ENCODE measurements at regions of chr4 and their contacts with region 1.

Region 1: DNA sequence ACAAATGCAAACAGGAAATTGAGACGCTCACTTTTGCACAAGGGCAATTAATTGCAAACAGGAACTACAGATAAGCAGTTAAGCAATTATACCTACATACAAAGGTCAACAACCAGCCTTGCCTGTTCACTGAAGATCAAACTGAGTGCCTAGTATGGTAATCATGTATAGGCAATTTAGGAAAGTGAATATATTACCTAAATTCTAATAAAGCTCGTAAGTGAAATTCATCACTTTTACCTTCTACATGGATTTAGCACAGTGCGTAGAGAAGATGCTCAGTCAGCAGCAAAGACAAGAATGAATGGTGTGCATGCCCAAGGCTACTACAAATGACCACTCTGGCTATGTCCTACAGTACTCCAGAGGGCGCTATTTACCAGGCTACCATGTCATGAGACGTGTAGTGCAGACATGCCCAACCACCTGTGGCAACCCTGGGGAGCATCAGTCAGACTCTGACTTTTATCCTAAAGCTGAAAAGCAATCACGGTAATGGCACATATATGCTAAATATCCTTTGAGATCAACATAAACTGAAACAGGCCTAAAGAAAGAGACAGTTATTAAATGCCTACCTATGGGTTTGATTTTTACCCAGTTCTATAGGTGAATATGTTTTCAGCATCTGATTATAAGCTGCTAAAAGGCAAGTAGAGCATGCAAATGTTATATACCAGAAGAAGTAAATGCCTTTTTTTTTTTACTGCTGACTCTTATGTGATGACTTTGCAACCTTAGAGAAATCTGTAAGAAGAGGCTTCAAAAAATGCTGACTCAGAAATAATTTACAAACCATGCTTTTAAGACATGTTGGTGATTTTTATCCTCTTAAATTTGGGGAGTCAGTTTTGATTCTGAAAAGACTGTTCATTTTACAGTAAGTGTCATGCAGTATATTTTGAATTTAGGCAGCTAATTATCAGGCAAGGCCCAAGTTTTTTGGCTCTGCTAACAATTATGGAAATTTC is 178.0 kb downstream of the PPP3CA start:
- DNase-seq: peak; percentile 28 to 61
- ATAC-seq: peak; percentile 92 to 98
- H3K4me3 ChIP-seq: no peak overlapping the region
- H3K27ac ChIP-seq: no peak overlapping the region
- H3K4me1 ChIP-seq: peaks cover 0 to 17% of the 10 kb centered on the region in 2 donors
- H3K27me3 ChIP-seq: no peaks in the 10 kb centered on the region
- CTCF ChIP-seq: peak; percentile 69 to 83 (median 77)
- POLR2A ChIP-seq: no peak

Region 2: DNA sequence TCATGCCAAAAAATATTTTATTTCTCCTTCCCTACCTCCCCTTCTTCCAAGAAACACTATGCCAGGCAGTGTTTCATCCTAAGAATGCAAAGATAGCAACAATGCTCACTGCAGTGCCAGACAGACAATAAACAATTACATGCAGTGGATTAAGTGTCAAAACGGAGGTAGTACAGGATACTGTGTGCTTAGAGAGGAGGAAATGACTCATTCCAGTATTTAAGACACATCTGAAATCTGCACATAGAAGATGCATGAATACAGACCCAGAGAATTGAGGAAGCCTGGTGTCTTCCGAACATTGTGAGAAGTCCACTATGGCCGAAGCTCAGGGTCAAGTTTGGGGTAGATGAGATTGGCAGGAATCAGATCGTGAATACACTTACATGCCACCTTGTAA is 148.4 kb before region 1 on chr4:
- in situ Hi-C with region 1: no loop called
- intact Hi-C with region 1: no loop called
- DNase-seq: no peak
- ATAC-seq: peak; percentile 55 to 83
- H3K4me3 ChIP-seq: no peak overlapping the region
- H3K27ac ChIP-seq: peak overlapping the region in 1 of 4 donors; percentile 4
- H3K4me1 ChIP-seq: peaks cover 7 to 8% of the 10 kb centered on the region in 2 donors
- H3K27me3 ChIP-seq: no peaks in the 10 kb centered on the region
- CTCF ChIP-seq: no peak
- POLR2A ChIP-seq: no peak

Region 3: DNA sequence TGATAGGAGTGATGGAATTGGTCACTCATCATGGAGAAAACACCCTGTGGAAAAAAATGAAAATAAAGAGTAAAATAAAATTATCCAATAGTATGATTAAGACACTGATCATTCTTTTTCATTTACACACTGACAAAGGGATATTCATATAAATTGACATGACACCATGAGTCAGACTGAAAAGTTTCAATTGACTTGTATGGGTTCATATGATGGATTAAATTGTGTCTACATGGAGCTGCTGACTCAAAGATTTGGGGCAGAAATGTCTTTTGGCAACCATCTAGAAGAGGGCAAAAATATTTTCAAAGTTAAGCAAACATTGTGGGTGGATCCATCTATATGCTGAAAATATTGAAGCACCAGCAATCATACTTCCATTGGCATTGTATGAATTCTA is 331.4 kb after region 1 on chr4:
- in situ Hi-C with region 1: no loop called
- intact Hi-C with region 1: no loop called
- DNase-seq: no peak
- ATAC-seq: no peak
- H3K4me3 ChIP-seq: no peak overlapping the region
- H3K27ac ChIP-seq: no peak overlapping the region
- H3K4me1 ChIP-seq: no peaks in the 10 kb centered on the region
- H3K27me3 ChIP-seq: no peaks in the 10 kb centered on the region
- CTCF ChIP-seq: no peak
- POLR2A ChIP-seq: no peak

Region 4: DNA sequence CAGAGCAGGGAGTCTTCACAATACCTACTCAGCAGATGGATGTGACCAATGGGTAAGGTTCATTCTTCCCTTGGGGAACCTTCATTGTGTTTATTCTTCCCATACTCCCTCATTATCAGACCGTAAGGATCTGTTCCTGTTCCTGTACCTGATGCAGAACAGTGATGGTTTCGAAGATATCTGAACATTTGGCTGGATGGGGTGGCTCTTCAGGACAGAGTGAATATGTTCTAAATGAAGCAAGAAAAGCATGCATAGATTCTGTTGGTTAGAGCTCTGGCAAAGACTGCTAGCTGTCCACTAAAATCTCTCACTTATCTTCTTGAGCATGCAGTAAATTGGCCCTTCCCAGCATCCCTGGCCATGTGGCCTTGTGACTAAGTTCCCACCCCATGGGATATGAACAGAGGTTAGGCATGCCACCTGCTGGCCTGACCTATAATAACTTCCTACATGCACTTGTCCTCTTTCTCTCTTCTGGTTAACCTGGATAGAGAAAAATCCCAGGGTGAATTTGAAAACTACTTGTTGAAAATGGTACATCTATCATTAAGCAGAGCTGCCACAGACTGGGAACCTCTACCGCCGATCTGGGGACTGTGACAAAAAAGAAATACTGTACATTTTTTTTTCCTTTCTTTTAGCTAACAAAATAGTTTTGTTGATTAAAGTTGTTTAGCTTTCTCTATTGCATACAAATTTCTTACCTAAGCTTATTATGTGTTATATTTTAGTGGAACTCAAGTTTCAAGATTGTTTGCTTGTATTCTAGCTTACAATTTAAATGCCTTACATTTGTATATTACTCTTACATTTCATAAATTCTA is 561.2 kb after region 1 on chr4:
- in situ Hi-C with region 1: loop called (anchors 5 to 10 kb)
- intact Hi-C with region 1: loop called (anchors 1 kb)
- DNase-seq: peak; percentile 24 to 58
- ATAC-seq: peak; percentile 52 to 90
- H3K4me3 ChIP-seq: no peak overlapping the region
- H3K27ac ChIP-seq: no peak overlapping the region
- H3K4me1 ChIP-seq: no peaks in the 10 kb centered on the region
- H3K27me3 ChIP-seq: no peaks in the 10 kb centered on the region
- CTCF ChIP-seq: peak; percentile 38 to 67 (median 63)
- POLR2A ChIP-seq: no peak

Measured in gastrocnemius medialis (tissue), 4 donors.